ENCODE measurements at regions of chr15 and their contacts with region 1.

Region 1: GRCh38 chr15:41116116-41116871 is at the start of gene INO80:
- DNase-seq: peak; percentile 98
- H3K4me3 Mint-ChIP-seq: peak within 1 kb of the TSS; percentile 89
- H3K27ac Mint-ChIP-seq: peak within 1 kb of the TSS; percentile 96
- H3K4me1 Mint-ChIP-seq: peaks cover 34% of the 10 kb centered on the region
- H3K27me3 Mint-ChIP-seq: no peaks in the 10 kb centered on the region
- total RNA-seq, gene INO80: 21.8 to 22.1 TPM

Region 2: DNA sequence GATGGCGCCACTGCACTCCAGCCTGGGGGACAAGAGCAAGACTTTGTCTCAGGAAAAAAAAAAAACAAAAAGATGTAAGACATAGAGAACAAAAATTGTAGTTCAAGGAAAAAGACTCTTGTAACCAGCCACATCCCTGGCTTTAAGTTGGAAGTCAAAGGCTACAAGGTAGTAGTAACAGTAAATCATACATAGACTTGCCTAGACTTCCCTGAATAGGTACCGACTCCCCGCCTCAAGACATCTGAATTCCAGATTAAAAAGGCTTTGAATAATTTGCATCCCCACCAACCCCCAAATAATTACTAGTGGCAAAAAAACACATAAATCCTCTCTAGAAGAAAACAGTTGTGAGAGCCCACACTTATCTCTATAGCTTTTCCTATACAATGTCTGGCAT is 55.8 kb before region 1 on chr15:
- CTCF ChIA-PET with region 1: no interaction called
- POLR2A ChIA-PET with region 1: no interaction called
- DNase-seq: no peak
- H3K4me3 Mint-ChIP-seq: no peak overlapping the region
- H3K27ac Mint-ChIP-seq: no peak overlapping the region
- H3K4me1 Mint-ChIP-seq: no peaks in the 10 kb centered on the region
- H3K27me3 Mint-ChIP-seq: no peaks in the 10 kb centered on the region

Region 3: DNA sequence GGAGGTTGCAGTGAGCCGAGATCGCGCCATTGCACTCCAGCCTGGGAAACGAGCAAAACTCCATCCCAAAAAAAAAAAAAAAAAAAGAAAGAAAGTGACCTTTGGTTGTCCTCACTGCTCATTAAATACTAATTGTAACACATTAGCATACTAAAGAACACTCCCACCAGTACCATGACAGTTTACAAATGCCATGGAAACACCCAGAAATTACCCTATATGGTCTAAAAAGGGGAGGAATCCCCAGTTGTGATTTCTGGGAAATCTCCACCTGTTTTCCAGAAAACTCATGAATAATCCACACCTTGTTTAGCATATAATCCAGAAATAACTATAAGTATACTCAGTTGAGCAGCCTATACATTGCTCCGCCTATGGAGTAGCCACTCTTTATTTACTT is 23.3 kb after region 1 on chr15:
- CTCF ChIA-PET with region 1: no interaction called
- POLR2A ChIA-PET with region 1: no interaction called
- DNase-seq: no peak
- H3K4me3 Mint-ChIP-seq: no peak overlapping the region
- H3K27ac Mint-ChIP-seq: no peak overlapping the region
- H3K4me1 Mint-ChIP-seq: peaks cover 15% of the 10 kb centered on the region
- H3K27me3 Mint-ChIP-seq: no peaks in the 10 kb centered on the region

Region 4: GRCh38 chr15:41150279-41150678 is 34.0 kb after region 1 on chr15:
- CTCF ChIA-PET with region 1: no interaction called
- POLR2A ChIA-PET with region 1: interaction called, 33 read pairs
- DNase-seq: no peak
- H3K4me3 Mint-ChIP-seq: peak overlapping the region; percentile 56
- H3K27ac Mint-ChIP-seq: peak overlapping the region; percentile 94
- H3K4me1 Mint-ChIP-seq: peaks cover 36% of the 10 kb centered on the region
- H3K27me3 Mint-ChIP-seq: no peaks in the 10 kb centered on the region

Measured in activated CD4-positive, alpha-beta memory T cell treated with anti-CD3 and anti-CD28 coated beads, Interleukin-2, amount 10 ng/mL, durations not matched to agents 7 days and 5 days (primary cell).